ENCODE measurements at regions of chr3 and their contacts with region 1.

Region 1: GRCh38 chr3:67635257-67635656 is 19.2 kb downstream of the SUCLG2 start:
- DNase-seq: peak; percentile 13
- ATAC-seq: peak; percentile 96
- H3K4me3 Mint-ChIP-seq: no peak overlapping the region
- H3K27ac Mint-ChIP-seq: peak overlapping the region; percentile 55
- H3K4me1 Mint-ChIP-seq: peaks cover 68% of the 10 kb centered on the region
- H3K27me3 Mint-ChIP-seq: no peaks in the 10 kb centered on the region

Region 2: GRCh38 chr3:67599821-67600220 is 35.4 kb before region 1 on chr3:
- CTCF ChIA-PET with region 1: interaction called, 3 read pairs
- POLR2A ChIA-PET with region 1: interaction called, 12 read pairs
- intact Hi-C with region 1: no loop called
- DNase-seq: no peak
- ATAC-seq: no peak
- H3K4me3 Mint-ChIP-seq: no peak overlapping the region
- H3K27ac Mint-ChIP-seq: no peak overlapping the region
- H3K4me1 Mint-ChIP-seq: peaks cover 71% of the 10 kb centered on the region
- H3K27me3 Mint-ChIP-seq: no peaks in the 10 kb centered on the region

Region 3: GRCh38 chr3:68127718-68128117 is 492.5 kb after region 1 on chr3:
- CTCF ChIA-PET with region 1: no interaction called
- POLR2A ChIA-PET with region 1: no interaction called
- intact Hi-C with region 1: no loop called
- DNase-seq: no peak
- ATAC-seq: no peak
- H3K4me3 Mint-ChIP-seq: no peak overlapping the region
- H3K27ac Mint-ChIP-seq: no peak overlapping the region
- H3K4me1 Mint-ChIP-seq: peaks cover 6% of the 10 kb centered on the region
- H3K27me3 Mint-ChIP-seq: no peaks in the 10 kb centered on the region